Posterior vena cava (tissue), 2 donors: ENCODE measurements at regions of chr2 and their contacts with region 1.

Region 1: DNA sequence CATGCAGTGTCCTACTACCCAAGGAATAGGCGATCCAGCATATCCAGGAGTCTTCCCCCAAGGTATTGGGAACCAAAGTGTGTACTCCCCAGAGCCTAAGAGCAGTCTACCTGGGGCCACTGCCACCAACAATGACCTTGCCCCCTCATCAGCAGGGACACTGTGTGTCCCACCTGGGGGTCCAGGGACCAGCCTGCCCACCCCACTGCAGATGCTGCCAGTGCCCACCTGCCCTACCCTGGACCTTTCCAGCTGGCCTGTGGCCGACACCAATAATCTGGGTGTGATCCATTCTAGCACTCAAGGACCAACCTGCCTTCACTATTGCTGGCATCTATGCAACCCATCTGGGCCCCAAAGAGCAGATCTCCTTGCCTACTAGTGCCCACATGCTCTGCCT is 32.2 kb downstream of the DNAH7 start:
- DNase-seq: no peak

Region 2: DNA sequence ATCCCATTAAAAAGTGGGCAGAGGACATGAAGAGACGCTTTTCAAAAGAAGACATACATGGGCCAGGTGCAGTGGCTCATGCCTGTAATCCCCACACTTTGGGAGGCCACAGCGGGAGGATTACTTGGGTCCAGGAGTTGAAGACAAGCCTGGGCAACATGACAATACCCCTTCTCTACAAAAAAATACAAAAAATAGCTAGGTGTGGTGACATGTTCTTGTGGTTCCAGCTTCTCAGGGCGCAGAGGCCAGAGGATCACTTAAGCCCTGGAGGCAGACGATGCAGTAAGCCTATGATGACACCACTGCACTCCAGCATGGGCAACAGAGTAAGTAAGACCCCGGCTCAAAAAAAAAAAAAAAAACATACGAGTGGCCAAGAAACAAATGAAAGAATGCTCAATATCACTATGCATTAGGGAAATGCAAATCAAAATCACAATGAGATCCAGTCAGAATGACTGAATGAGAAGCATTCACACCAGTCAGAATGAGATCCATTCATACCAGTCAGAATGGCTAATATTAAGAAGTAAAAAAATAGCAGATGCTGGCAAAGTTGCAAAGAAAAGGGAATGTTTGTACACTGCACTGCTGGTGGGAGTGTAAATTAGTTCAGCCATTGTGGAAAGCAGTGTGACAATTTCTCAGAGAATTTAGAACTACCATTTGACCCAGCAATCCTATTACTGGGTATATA is 929.6 kb before region 1 on chr2:
- intact Hi-C with region 1: loop called in 1 of 2 experiments (anchors 10 kb)
- DNase-seq: no peak

Region 3: GRCh38 chr2:195903956-195904355 is 132.5 kb before region 1 on chr2:
- intact Hi-C with region 1: no loop called
- DNase-seq: no peak

Region 4: GRCh38 chr2:195961873-195962272 is 74.6 kb before region 1 on chr2:
- intact Hi-C with region 1: no loop called
- DNase-seq: no peak